ENCODE measurements at regions of chr19 and their contacts with region 1.

Region 1: DNA sequence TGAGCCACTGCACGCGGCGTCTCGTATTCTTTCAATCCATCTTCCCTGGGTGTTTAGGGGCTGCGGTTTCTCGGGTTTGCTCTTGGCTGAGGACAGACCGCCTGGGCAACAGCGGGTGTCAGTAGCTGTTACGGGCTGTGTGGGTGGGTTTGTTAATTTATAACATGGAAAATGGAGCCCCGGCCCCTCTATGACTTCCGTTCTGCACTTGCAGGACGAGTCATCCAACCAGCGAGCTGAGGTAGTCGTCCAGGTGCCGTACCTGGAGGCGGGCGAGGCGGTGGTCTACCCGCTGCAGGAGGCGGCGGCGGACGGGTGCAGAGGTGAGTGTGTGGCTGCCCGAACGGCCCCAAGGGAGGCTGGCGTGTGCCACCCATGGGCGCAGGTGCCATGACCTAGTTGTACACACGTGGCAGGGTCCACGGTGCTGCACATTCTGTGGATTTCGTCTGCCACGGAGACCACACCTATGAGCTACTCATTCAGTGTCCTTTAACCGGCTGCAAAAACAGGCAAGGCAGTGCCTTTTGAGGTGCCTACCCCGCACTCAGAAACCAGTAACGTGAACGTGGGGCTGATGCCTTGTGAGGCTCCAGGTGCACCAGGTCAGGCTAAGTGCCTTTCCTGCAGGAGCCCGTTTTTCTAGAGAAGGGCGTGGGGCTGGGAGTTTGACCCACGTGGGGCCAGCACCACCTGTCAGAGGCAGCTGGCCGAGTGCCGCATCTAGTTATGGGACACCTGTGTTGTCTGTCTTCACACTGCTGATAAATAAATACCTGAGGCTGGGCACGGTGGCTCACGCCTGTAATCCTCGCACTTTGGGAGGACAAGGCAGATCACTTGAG is 10.9 kb downstream of the POLR2E start:
- DNase-seq: no peak
- H3K4me3 Mint-ChIP-seq: no peak overlapping the region
- H3K27ac Mint-ChIP-seq: no peak overlapping the region
- H3K4me1 Mint-ChIP-seq: peaks cover 6% of the 10 kb centered on the region
- H3K27me3 Mint-ChIP-seq: no peaks in the 10 kb centered on the region
- CTCF ChIP-seq: no peak

Region 2: DNA sequence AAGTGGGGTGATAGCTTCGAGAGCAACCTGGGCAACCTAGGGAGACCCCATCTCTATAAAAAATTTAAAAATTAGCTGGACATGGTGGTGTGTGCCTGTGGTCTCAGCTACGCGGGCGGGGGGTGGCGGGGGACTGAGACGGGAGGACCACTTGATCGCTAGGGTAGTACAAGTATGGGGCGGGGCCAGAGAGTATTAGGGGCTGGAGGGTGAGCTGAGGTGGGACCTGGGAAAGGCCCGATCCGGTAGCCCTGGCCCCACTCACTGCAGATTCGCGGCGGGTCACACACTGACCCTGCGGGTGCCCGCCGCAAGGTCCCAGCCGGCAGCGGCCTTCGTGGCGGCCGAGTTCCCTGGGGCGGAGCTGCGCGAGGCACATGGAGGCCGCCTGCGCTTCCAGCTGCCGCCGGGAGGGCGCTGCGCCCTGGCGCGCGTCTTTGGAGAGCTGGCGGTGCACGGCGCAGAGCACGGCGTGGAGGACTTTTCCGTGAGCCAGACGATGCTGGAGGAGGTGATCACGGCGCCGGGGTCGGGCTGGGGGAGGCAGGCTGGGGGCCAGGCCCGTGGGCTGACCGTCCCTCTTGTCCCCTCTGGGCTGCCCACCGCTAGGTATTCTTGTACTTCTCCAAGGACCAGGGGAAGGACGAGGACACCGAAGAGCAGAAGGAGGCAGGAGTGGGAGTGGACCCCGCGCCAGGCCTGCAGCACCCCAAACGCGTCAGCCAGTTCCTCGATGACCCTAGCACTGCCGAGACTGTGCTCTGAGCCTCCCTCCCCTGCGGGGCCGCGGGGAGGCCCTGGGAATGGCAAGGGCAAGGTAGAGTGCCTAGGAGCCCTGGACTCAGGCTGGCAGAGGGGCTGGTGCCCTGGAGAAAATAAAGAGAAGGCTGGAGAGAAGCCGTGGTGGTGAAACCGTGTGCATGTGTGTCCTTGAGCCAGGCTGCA is 19.3 kb before region 1 on chr19:
- CTCF ChIA-PET with region 1: interaction called, 5 read pairs
- POLR2A ChIA-PET with region 1: interaction called, 12 read pairs
- intact Hi-C with region 1: no loop called
- DNase-seq: peak; percentile 74
- H3K4me3 Mint-ChIP-seq: peak overlapping the region; percentile 72
- H3K27ac Mint-ChIP-seq: no peak overlapping the region
- H3K4me1 Mint-ChIP-seq: peaks cover 23% of the 10 kb centered on the region
- H3K27me3 Mint-ChIP-seq: no peaks in the 10 kb centered on the region
- CTCF ChIP-seq: peak; percentile 79

Region 3: DNA sequence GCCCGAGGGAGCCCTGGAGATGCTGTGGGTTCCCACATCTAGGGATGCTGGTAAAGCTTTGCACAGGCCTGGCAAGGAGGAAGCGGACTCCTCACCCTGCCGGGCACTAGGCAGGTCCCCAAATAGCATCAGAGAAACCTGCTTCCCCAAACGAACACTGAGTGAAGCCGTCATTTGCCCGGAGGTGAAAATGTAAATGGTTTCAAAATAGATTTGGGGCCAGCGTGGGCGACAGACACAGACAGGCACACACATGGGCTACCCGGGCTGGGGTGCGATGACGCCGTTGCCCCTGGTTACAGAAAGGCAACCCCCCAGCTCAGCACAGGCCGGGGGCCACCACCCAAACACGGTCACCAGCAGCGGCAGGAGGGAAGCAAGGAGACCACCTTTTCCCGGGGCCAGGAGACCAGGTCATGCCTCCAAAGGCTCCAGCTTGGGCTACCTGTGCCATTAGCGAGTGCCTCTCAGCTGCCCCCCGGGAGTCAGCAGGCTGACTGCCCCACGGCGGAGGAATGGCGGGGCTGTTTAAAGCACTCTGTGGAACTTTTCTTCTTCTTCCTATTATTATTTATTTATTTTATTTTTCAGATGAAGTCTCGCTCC is 251.9 kb after region 1 on chr19:
- CTCF ChIA-PET with region 1: no interaction called
- POLR2A ChIA-PET with region 1: no interaction called
- intact Hi-C with region 1: no loop called
- DNase-seq: no peak
- H3K4me3 Mint-ChIP-seq: no peak overlapping the region
- H3K27ac Mint-ChIP-seq: no peak overlapping the region
- H3K4me1 Mint-ChIP-seq: no peaks in the 10 kb centered on the region
- H3K27me3 Mint-ChIP-seq: no peaks in the 10 kb centered on the region
- CTCF ChIP-seq: no peak